Posterior vena cava (tissue), 2 donors: ENCODE measurements at regions of chr2 and their contacts with region 1.

Region 1: DNA sequence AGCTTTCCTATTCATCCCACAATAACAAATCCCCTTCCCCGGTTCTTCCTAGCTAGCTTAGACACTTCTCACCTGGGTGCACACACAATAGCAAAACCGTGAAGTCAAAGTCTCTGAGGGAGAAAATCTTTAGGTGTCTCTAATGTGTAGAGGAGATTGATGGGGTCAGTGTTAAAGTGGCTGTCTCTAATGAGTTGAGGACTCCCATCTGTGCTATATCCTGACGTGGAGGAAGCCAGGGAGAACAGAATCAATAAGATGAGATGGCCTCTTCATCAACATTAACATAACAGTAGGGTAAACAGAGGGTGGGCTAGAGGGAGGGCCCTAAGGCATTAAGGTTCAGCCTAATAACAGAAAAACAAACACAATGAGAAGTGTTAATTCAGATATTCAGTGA is 120.4 kb downstream of the SLC5A7 start:
- DNase-seq: no peak

Region 2: DNA sequence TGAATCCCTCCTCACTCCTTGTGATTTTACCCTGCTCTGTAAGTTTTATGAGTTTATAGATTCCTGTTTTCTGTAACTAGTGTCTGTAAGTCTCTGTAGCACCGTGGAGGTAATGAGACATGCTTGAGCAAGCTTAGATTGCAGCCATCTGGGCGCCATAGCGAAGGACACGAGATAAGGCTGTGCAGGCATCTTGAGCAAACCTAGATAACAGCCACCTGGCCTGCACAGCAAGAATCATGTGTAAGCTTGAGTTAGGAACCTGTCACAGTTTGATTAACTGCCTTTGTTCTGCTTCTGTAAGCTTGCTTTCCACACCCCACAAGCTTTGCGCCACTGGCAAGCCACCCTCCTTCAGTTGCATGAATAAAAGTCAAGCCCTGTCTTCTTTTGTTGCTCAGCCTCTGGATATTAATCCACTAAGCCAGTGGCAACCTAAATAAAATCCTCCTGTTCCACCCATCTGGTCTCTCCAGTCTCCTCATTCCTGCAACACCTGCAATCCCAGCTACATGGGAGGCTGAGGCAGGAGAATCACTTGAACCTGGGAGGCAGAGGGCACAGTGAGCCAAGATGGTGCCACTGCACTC is 550.6 kb before region 1 on chr2:
- intact Hi-C with region 1: loop called in 1 of 2 experiments (anchors 5 kb)
- DNase-seq: no peak